ENCODE measurements at regions of chr6 and their contacts with region 1.

Region 1: DNA sequence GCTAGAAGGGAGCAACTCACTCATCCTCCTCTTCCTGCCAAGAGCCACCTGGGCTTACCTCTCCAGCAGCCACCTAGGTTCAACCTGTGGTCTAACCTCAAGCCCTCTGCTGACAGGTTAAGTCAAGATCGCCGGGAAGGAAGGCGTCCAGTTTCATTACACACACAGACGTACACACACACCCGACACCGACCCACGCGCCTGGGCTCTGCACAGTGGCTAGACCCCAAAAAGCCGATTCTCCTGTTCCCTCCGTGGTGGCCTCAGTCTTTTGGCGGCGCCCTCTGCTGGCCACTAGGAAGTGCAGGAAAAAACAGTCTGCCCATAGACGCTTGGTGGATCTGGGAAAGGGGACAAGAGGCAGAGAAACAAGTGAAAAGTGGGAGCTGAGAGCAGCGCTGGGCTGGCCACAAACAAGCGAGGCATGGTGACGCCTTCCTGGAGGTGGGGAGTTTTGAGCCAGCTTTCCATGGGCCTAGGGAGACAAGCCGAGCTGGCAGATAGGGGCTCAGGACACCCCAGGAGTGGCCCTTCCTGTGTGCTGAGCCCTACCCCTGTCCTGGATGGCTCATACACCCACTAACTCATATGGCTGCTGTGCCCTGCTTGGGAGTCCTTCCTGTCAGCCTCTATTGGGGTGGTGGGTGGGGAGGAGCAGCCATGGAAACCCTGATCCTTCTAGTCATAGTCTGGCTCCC is 52.7 kb downstream of the MRPL14 start:
- DNase-seq: peak; percentile 61
- H3K4me3 ChIP-seq: no peak overlapping the region
- H3K27ac ChIP-seq: peak overlapping the region; percentile 21
- H3K27me3 ChIP-seq: no peaks in the 10 kb centered on the region
- CTCF ChIP-seq: peak; percentile 93

Region 2: DNA sequence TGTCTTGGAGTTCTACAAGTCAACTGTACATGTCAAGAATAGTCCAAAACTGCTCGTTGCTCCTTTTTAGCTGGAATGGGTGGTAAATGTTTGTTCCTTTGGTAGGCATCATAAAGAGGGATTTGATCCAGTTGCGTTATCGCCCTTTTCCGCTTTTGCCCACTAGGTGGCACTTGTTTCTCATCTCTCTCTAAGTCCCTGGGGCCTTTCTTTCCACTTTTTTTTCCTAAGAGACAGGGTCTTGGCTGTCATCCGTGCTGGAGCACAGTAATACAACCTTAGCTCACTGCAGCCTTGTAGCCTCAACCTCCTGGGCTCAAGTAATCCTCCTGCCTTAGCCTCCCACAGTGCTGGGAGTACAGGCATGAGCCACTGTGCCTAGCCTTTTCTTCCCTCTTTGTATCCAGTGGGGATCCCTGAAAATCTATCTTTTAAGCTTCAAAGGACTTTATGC is 466.3 kb before region 1 on chr6:
- CTCF ChIA-PET with region 1: interaction called, 32 read pairs
- POLR2A ChIA-PET with region 1: no interaction called
- DNase-seq: peak; percentile 61
- H3K4me3 ChIP-seq: no peak overlapping the region
- H3K27ac ChIP-seq: no peak overlapping the region
- H3K27me3 ChIP-seq: no peaks in the 10 kb centered on the region
- CTCF ChIP-seq: peak; percentile 93

Region 3: DNA sequence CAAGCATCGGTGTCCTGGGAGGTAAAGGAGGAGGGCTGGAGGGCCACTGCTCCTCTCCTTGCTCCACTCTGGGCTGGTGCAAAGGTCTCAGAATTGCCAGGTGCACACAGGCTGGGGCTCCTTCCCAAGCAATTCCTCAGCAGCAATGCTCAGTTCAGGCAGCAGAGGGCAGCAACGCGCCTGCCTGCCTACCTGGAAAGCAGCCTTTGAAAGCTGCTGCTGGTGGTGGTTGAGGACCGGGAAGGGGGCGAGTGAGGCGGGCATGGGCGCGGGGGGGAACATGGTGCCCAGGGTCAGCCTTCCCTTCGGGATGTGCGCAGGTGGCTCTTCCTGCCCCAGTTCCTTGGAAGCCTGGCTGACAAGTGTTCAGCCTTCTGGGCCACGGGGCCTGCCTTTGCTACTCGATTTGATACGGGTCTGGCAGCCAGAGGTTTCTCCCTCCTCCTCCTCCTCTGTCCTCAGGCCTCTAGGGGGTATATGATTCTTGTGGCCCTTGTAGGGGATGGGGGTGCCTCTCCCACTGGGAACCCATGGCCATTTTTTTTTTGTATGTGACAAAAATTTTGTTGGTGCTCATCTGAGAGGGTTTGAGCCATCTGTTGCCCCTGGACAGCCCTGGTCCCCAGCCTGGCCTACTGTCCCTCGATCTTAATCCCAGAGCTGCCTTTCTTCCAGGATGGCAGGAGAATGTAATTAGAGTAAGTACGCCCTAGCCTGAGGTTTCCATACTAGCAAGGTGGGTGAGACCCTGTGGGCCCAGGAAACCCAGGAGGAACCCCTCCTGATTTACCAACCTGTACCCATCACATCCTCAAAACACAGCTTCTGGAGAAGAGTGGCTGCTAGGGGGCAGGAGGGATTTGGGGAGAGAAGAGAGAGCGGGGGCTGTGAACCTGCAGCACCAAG is 407.1 kb before region 1 on chr6:
- CTCF ChIA-PET with region 1: interaction called, 90 read pairs
- POLR2A ChIA-PET with region 1: no interaction called
- DNase-seq: no peak
- H3K4me3 ChIP-seq: peak overlapping the region; percentile 36; the same call in 1 of the 2 replicates
- H3K27ac ChIP-seq: peak overlapping the region; percentile 21
- H3K27me3 ChIP-seq: peaks cover 5% of the 10 kb centered on the region
- CTCF ChIP-seq: peak; percentile 97

Region 4: DNA sequence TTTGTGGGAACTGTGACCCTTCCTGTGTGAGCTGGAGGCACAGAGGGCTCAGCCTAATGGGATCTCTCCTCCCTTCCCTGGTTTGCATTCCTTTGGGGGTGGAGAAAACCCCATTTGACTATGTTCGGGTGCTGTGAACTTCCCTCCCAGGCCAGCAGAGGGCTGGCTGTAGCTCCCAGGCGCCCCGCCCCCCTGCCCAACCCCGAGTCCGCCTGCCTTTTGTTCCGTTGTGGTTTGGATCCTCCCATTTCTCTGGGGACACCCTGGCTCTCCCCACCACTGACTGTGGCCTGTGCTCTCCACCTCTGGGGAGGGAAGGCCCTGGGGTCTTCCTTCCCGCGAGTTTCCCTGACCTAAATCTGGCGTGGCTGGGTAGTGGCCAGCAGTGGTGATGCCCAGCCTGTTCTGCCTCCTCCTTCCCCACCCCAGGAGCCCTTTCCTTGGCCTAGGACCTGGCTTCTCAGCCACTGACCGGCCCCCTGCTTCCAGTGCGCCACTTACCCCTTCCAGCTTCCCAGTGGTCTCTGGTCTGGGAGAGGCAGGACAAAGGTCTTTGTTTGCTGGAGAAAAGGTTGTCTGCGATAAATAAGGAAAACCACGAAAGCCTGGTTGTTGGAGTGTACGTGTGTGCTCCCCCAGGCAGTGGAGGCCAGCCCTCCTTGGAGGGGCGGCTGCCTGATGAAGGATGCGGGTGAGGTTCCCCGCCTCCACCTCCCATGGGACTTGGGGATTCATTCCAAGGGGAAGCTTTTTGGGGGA is 299.6 kb before region 1 on chr6:
- CTCF ChIA-PET with region 1: interaction called, 94 read pairs
- POLR2A ChIA-PET with region 1: interaction called, 40 read pairs
- DNase-seq: no peak
- H3K4me3 ChIP-seq: peak overlapping the region; percentile 96
- H3K27ac ChIP-seq: peak overlapping the region; percentile 39
- H3K27me3 ChIP-seq: no peaks in the 10 kb centered on the region
- CTCF ChIP-seq: peak; percentile 94

Region 5: DNA sequence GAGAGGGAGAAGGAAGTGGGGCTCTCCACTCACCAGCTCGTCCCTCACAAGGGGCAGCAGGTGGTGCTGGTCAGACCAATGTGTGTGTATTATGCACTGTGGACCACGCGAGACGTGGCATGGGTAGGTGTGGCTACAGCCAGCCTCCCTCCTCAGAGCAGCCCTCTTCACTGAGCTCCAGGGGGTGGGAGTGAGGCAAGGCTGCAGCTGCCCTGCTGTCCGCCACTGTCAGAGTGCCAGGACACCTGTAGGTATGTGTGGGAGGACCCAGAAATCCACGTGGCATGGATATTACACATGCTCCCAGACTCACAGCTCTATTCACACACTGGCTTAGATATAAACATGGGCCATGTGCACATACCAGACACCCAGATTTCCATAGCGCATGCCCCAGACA is 214.3 kb before region 1 on chr6:
- CTCF ChIA-PET with region 1: no interaction called
- POLR2A ChIA-PET with region 1: no interaction called
- DNase-seq: no peak
- H3K4me3 ChIP-seq: no peak overlapping the region
- H3K27ac ChIP-seq: no peak overlapping the region
- H3K27me3 ChIP-seq: peaks cover 38% of the 10 kb centered on the region
- CTCF ChIP-seq: no peak

Region 6: DNA sequence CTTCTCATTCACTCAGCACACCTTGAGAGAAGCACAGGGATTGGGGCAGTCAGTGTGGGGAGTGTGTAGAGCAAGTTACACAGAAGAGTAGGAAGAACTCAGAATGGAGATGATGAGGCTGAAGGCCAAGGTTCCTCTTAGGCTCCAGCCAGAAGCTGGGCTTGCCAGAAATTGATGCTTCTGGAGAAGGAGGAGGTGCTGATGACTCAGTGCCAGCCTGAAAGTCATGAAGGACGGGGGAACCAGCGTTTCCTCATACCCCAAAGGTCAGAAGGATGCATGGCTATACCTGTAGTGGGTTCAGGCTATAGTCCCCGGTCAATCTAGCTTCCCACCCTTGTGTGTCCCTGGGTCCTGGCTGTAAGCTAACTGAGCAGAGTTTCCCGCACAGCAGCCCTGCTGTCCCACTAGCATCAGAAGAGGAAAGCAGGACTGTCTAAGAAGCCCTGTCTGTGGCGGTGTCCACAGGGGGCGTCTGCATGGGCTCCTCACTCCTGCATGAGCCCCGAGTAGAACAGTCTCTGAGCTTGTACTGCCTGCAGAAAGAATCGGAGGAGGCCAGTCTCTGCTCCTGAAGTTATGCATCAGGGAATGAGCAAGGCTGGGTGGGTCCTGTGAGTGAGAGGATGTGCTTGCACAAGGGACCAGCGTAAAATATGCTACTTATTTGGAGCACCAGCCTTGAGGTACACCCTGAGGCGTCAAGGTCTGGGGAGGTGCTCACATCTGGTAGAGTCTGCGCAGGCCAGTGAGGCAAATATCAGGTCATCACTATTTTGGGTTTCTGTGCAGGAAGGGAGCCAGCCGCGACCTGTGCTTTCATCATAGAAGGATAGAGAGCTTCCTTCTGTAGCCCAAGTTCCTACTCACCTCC is 95.9 kb before region 1 on chr6:
- CTCF ChIA-PET with region 1: no interaction called
- POLR2A ChIA-PET with region 1: no interaction called
- DNase-seq: no peak
- H3K4me3 ChIP-seq: no peak overlapping the region
- H3K27ac ChIP-seq: no peak overlapping the region
- H3K27me3 ChIP-seq: no peaks in the 10 kb centered on the region
- CTCF ChIP-seq: no peak

Region 7: GRCh38 chr6:44041461-44042260 is 32.9 kb before region 1 on chr6:
- CTCF ChIA-PET with region 1: interaction called, 10 read pairs
- POLR2A ChIA-PET with region 1: no interaction called
- DNase-seq: peak; percentile 97
- H3K4me3 ChIP-seq: no peak overlapping the region
- H3K27ac ChIP-seq: peak overlapping the region; percentile 96
- H3K27me3 ChIP-seq: no peaks in the 10 kb centered on the region
- CTCF ChIP-seq: no peak

Region 8: GRCh38 chr6:44116641-44117382 is 42.2 kb after region 1 on chr6:
- CTCF ChIA-PET with region 1: no interaction called
- POLR2A ChIA-PET with region 1: no interaction called
- DNase-seq: peak; percentile 62
- H3K4me3 ChIP-seq: peak overlapping the region; percentile 14
- H3K27ac ChIP-seq: peak overlapping the region; percentile 95
- H3K27me3 ChIP-seq: no peaks in the 10 kb centered on the region
- CTCF ChIP-seq: no peak

Region 9: DNA sequence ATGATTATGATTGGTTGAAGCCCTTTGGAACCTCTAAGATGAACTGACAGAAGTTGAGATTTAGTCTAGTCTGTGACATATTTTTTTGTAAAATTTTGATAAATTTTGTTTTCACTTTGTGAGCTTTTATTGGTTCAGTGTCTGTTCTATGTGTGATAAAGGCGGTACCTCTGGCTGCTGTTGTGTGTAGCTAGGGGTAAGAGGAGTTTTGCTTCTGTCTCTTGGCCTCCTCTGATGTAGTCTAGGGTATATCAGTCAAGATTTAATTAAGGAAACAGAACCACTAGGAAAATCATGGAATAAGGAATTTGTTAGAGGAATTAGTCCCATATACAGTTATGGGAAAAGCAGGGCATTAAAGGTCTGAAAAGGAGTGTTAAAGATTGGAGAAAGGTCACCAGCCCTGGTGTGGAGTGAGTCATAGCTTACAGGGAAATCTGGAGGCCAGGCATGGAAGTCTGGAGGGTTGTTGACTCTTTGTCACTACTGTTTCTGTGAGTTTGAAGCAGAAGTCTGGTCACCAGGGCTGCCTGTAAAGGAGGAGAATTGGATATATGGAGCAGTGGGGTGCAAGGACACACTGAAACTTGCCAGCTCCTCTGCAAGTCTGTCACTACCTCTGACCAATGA is 341.4 kb after region 1 on chr6:
- CTCF ChIA-PET with region 1: no interaction called
- POLR2A ChIA-PET with region 1: no interaction called
- DNase-seq: peak; percentile 2
- H3K4me3 ChIP-seq: no peak overlapping the region
- H3K27ac ChIP-seq: peak overlapping the region; percentile 34
- H3K27me3 ChIP-seq: no peaks in the 10 kb centered on the region
- CTCF ChIP-seq: no peak

Measured in AG04450 (cell line).